Natural killer cell (primary cell): ENCODE measurements at regions of chr19 and their contacts with region 1.

Region 1: DNA sequence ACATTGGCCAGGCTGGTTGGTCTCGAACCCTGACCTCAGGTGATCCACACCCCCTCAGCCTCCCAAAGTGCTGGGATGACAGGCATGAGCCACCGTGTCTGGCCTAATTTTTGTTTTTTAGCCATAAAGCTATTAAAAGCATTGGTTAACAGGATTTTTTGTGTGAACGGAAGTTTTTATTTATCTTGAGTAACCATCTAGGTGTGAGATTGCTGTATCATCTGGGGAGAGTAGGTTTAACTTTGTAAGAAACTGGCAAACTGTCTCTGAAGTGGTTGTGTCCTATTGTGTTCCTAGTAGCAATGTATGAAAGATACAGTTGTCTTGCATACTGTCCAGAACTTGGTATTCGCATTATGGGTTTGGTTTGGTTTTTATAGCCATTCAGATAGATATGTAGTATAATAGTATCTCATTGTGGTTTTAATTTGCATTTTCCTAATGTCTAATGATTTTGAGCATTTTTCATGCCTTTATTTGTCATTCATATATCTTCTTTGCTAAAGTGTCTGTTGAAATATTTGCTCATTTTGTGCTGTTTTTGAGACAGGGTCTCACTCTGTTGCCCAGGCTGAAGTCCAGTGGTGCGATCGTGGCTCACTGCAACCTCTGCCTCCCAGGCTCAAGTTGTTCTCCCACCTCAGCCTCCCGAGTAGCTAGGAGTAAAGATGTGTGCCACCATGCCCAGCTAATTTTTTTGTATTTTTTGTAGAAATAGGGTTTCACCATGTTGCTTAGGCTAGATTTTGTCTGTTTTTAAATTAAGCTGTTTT is 13.5 kb upstream of the PLEKHF1 start:
- DNase-seq: no peak
- ATAC-seq: peak; percentile 62 to 88 (median 84)
- H3K4me3 ChIP-seq: no peak overlapping the region
- H3K4me3 Mint-ChIP-seq: peak overlapping the region; percentile 73
- H3K27ac ChIP-seq: no peak overlapping the region
- H3K27ac Mint-ChIP-seq: peak overlapping the region; percentile 77 to 84
- H3K4me1 ChIP-seq: peaks cover 15% of the 10 kb centered on the region
- H3K4me1 Mint-ChIP-seq: peaks cover 32 to 43% of the 10 kb centered on the region in 2 donors
- H3K27me3 ChIP-seq: no peaks in the 10 kb centered on the region
- H3K27me3 Mint-ChIP-seq: no peaks in the 10 kb centered on the region
- CTCF ChIP-seq: no peak

Region 2: DNA sequence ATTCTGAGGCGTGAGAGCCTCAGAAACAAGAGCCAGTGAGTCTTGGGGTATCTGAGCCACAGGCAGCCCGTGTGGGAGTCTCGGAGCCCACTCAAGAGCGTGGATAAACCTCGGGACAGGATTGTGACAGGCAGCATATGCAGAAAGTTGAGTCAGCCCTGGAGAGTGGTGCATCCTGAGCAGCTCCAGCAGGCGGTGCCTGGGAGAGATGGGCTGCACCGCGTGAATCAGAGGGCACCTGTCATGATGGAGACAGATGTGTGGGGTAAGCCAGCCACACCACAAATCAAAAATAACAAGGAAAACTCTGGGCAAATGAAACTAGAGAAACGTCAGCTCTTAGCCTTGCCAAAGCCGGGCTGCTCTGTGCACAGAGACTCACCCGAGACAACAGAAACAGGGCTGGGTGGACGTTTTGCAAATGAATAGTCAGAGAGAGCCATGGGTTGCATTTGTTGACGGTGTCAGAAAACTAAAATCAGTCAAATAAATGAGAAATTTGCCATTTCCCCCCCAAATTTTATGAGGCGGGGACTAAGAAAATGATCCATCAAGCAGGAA is 75.7 kb before region 1 on chr19:
- intact Hi-C with region 1: no loop called
- DNase-seq: no peak
- ATAC-seq: no peak
- H3K4me3 ChIP-seq: no peak overlapping the region
- H3K4me3 Mint-ChIP-seq: no peak overlapping the region
- H3K27ac ChIP-seq: no peak overlapping the region
- H3K27ac Mint-ChIP-seq: no peak overlapping the region
- H3K4me1 ChIP-seq: no peaks in the 10 kb centered on the region
- H3K4me1 Mint-ChIP-seq: no peaks in the 10 kb centered on the region
- H3K27me3 ChIP-seq: no peaks in the 10 kb centered on the region
- H3K27me3 Mint-ChIP-seq: peaks cover 40 to 60% of the 10 kb centered on the region in 2 donors
- CTCF ChIP-seq: no peak

Region 3: GRCh38 chr19:29671393-29672160 is 19.8 kb after region 1 on chr19:
- intact Hi-C with region 1: loop called (anchors 2 kb)
- DNase-seq: peak; percentile 81 to 93
- ATAC-seq: peak; percentile 71 to 86 (median 71)
- H3K4me3 ChIP-seq: peak overlapping the region; percentile 8
- H3K4me3 Mint-ChIP-seq: peak overlapping the region; percentile 91
- H3K27ac ChIP-seq: peak overlapping the region; percentile 96
- H3K27ac Mint-ChIP-seq: peak overlapping the region; percentile 94 to 98
- H3K4me1 ChIP-seq: peaks cover 100% of the 10 kb centered on the region
- H3K4me1 Mint-ChIP-seq: peaks cover 75 to 85% of the 10 kb centered on the region in 2 donors
- H3K27me3 ChIP-seq: no peaks in the 10 kb centered on the region
- H3K27me3 Mint-ChIP-seq: no peaks in the 10 kb centered on the region
- CTCF ChIP-seq: peak; percentile 77